Left cardiac atrium (tissue), 4 donors: ENCODE measurements at regions of chr5 and their contacts with region 1.

Region 1: DNA sequence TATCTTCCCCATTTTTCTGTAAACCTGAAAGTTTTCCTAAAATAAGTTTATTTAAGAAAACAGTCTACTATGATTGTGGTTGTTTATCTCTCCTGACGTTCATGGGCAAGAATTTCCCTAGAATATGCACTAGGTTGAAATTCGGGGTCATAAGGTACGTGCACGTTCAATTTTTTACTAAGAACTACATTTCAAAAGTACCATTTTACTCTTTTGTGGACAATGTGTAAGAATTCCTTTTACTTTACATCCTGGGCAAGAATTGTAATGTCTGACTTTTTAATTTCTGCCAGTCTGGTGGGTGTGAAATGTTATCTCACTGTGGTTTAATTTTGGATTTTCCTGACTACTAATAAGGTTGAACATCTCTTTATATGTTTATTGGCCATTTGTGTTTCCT is 12.4 kb downstream of the IL5 start:
- DNase-seq: no peak
- ATAC-seq: no peak

Region 2: GRCh38 chr5:132083071-132083678 is 447.8 kb before region 1 on chr5:
- intact Hi-C with region 1: no loop called
- DNase-seq: no peak
- ATAC-seq: no peak

Region 3: GRCh38 chr5:132272311-132273210 is 258.4 kb before region 1 on chr5:
- intact Hi-C with region 1: no loop called
- DNase-seq: peak; percentile 65
- ATAC-seq: peak; percentile 8 to 27

Region 4: DNA sequence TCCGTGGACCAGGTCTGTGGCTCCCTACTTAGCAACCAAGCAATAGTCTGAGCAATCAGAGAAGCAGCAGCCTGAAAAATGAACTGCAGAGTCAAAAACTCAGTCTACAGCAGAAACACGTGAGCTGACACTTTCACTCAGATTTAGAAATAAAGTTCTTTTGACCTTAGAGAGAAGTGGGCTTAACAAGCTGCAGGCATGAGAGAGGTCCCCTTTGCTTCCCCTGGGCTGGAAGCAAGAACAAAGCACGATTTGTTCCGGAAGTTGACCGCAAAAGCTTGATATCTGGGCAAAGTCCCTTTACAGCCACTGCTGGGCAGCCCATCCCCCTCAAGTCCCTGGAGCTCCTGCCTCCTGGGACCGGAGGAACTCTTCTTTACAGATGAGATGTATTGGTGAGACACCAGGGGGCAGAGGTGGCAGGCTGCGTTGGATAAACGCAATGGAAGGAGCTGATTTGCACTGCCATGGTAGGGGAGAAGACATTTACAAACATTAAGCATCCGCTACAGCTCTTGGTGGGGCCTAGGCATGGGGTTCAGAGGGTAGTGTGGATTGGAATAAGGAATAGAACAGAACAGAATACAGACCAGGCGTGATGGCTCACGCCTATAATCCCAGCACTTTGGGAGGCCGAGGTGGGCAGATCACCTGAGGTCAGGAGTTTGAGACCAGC is 276.4 kb after region 1 on chr5:
- intact Hi-C with region 1: loop called in 1 of 2 experiments (anchors 10 kb)
- DNase-seq: no peak
- ATAC-seq: no peak